ENCODE measurements at regions of chr1 and their contacts with region 1.

Region 1: DNA sequence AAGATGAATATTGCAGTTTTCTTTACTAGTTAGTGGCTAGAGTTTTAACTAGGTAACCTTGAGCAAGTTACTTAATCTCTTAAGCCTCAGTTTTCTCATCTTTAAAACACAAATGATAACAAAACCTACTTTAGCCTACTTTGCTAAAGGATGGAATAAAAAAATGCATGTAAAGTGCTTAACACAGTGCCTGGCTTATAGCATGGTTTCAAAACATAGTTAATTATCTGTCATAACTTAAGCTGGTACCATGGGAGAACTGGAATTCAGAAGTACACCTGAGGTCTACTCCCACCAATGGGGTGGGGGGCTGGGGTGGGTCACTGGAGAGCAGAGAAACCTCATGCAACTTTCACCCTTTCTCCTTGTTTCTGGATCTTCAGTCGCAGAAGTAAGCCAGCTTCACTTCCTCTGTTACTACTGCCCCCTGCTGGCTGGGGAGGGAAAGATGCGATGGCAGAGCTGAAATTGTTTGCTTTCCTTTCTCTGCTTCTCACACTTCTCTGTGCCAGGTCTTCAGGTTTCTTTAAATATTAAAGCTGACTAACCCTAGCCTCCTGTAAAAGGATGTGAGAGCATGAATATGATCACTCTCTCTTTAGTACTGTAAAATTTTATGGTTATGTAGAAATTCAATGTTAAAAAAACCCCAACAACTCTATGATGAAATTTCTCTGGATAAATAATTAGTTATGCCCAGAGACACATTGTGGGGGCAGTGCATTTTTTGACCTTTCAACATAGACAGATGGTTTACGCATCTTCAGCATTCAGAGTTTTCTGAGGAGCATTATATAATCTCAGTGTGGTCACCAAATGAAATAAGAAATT is 324.2 kb downstream of the HLX start:
- DNase-seq: peak; percentile 41
- H3K4me3 ChIP-seq: no peak overlapping the region
- H3K27ac ChIP-seq: no peak overlapping the region
- H3K27me3 ChIP-seq: no peaks in the 10 kb centered on the region
- CTCF ChIP-seq: peak; percentile 89

Region 2: GRCh38 chr1:220873868-220874655 is 329.4 kb before region 1 on chr1:
- CTCF ChIA-PET with region 1: interaction called, 93 read pairs
- POLR2A ChIA-PET with region 1: no interaction called
- DNase-seq: no peak
- H3K4me3 ChIP-seq: no peak overlapping the region
- H3K27ac ChIP-seq: no peak overlapping the region
- H3K27me3 ChIP-seq: no peaks in the 10 kb centered on the region
- CTCF ChIP-seq: peak; percentile 76

Region 3: GRCh38 chr1:220908757-220909156 is 294.7 kb before region 1 on chr1:
- CTCF ChIA-PET with region 1: interaction called, 36 read pairs
- POLR2A ChIA-PET with region 1: no interaction called
- DNase-seq: peak; percentile 7
- H3K4me3 ChIP-seq: no peak overlapping the region
- H3K27ac ChIP-seq: no peak overlapping the region
- H3K27me3 ChIP-seq: no peaks in the 10 kb centered on the region
- CTCF ChIP-seq: peak; percentile 78

Region 4: GRCh38 chr1:221217029-221217428 is 13.6 kb after region 1 on chr1:
- CTCF ChIA-PET with region 1: interaction called, 16 read pairs
- POLR2A ChIA-PET with region 1: no interaction called
- DNase-seq: no peak
- H3K4me3 ChIP-seq: no peak overlapping the region
- H3K27ac ChIP-seq: no peak overlapping the region
- H3K27me3 ChIP-seq: no peaks in the 10 kb centered on the region
- CTCF ChIP-seq: no peak

Region 5: GRCh38 chr1:221263831-221264767 is 60.7 kb after region 1 on chr1:
- CTCF ChIA-PET with region 1: interaction called, 11 read pairs
- POLR2A ChIA-PET with region 1: no interaction called
- DNase-seq: peak; percentile 56
- H3K4me3 ChIP-seq: no peak overlapping the region
- H3K27ac ChIP-seq: no peak overlapping the region
- H3K27me3 ChIP-seq: peaks cover 2% of the 10 kb centered on the region
- CTCF ChIP-seq: peak; percentile 64

Measured in AG04450 (cell line).